Dendritic cell treated with granulocyte-macrophage colony-stimulating factor and Interleukin-4, amounts not matched to agents 40 ng/mL and 50 ng/mL, for 4 days (primary cell): ENCODE measurements at regions of chr19 and their contacts with region 1.

Region 1: GRCh38 chr19:54448774-54449700 is at the start of gene LENG8:
- H3K4me3 Mint-ChIP-seq: peak within 1 kb of the TSS; percentile 96
- H3K27ac Mint-ChIP-seq: peak within 1 kb of the TSS; percentile 96
- H3K4me1 Mint-ChIP-seq: peaks cover 52% of the 10 kb centered on the region
- H3K27me3 Mint-ChIP-seq: no peaks in the 10 kb centered on the region

Region 2: GRCh38 chr19:54462655-54463530 is 13.9 kb after region 1 on chr19:
- intact Hi-C with region 1: loop called (anchors 1 kb)
- H3K4me3 Mint-ChIP-seq: peak overlapping the region; percentile 82
- H3K27ac Mint-ChIP-seq: peak overlapping the region; percentile 95
- H3K4me1 Mint-ChIP-seq: peaks cover 61% of the 10 kb centered on the region
- H3K27me3 Mint-ChIP-seq: peaks cover 24% of the 10 kb centered on the region

Region 3: GRCh38 chr19:54506079-54506478 is 57.0 kb after region 1 on chr19:
- intact Hi-C with region 1: no loop called
- H3K4me3 Mint-ChIP-seq: no peak overlapping the region
- H3K27ac Mint-ChIP-seq: no peak overlapping the region
- H3K4me1 Mint-ChIP-seq: peaks cover 17% of the 10 kb centered on the region
- H3K27me3 Mint-ChIP-seq: peaks cover 74% of the 10 kb centered on the region